ENCODE measurements at regions of chr1 and their contacts with region 1.

Region 1: GRCh38 chr1:226157761-226158316 is 28.7 kb downstream of the ACBD3 start:
- DNase-seq: no peak
- H3K4me3 Mint-ChIP-seq: no peak overlapping the region
- H3K27ac Mint-ChIP-seq: no peak overlapping the region
- H3K4me1 Mint-ChIP-seq: peaks cover 4% of the 10 kb centered on the region
- H3K27me3 Mint-ChIP-seq: no peaks in the 10 kb centered on the region

Region 2: DNA sequence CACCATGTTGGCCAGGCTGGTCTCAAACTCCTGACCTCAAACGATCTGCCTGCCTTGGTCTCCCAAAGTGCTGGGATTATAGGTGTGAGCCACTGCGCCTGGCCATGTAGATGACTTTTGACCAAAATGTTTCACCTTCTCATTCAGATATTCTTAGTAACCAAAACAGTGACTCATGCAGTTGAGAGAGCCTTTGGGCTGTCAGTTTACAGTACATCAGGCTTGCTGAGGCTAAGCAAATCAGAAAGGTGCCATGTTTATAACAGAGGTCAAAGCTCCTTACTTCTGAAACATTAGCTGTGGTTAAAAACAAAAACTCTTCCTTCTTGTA is 1780.2 kb before region 1 on chr1:
- CTCF ChIA-PET with region 1: no interaction called
- intact Hi-C with region 1: no loop called
- DNase-seq: peak; percentile 66
- H3K4me3 Mint-ChIP-seq: no peak overlapping the region
- H3K27ac Mint-ChIP-seq: peak overlapping the region; percentile 67
- H3K4me1 Mint-ChIP-seq: peaks cover 91% of the 10 kb centered on the region
- H3K27me3 Mint-ChIP-seq: no peaks in the 10 kb centered on the region

Region 3: GRCh38 chr1:226100436-226101391 is 57.1 kb before region 1 on chr1:
- CTCF ChIA-PET with region 1: no interaction called
- intact Hi-C with region 1: no loop called
- DNase-seq: peak; percentile 43
- H3K4me3 Mint-ChIP-seq: peak overlapping the region; percentile 79
- H3K27ac Mint-ChIP-seq: no peak overlapping the region
- H3K4me1 Mint-ChIP-seq: peaks cover 13% of the 10 kb centered on the region
- H3K27me3 Mint-ChIP-seq: peaks cover 2% of the 10 kb centered on the region

Region 4: DNA sequence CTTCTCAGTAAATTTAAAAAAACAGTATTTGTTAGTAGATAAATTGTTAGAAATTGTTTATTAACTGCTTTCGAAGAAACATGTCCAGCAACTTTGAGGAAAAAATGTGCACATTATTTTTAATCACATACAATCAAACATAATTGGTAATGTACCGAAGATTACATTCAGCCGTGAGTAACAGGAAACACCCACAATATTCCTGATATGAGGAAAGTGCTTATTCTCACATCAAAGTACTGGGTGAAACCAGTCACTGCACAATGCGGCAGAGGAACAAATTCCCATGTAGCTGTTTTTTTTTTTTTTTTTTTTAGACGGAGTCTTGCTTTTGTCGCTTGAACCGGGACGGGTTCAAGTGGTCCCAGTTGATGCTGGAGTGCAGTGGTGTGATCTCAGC is 19.0 kb after region 1 on chr1:
- CTCF ChIA-PET with region 1: interaction called, 11 read pairs
- intact Hi-C with region 1: no loop called
- DNase-seq: no peak
- H3K4me3 Mint-ChIP-seq: no peak overlapping the region
- H3K27ac Mint-ChIP-seq: no peak overlapping the region
- H3K4me1 Mint-ChIP-seq: peaks cover 36% of the 10 kb centered on the region
- H3K27me3 Mint-ChIP-seq: no peaks in the 10 kb centered on the region